ENCODE measurements at regions of chr17 and their contacts with region 1.

Region 1: GRCh38 chr17:5055543-5055942 is 20.3 kb upstream of the SLC52A1 start:
- DNase-seq: no peak
- H3K4me3 ChIP-seq: no peak overlapping the region
- H3K4me3 Mint-ChIP-seq: no peak overlapping the region
- H3K27ac ChIP-seq: no peak overlapping the region
- H3K27ac Mint-ChIP-seq: peak overlapping the region in 2 of 7 donors; percentile 22 to 35
- H3K4me1 ChIP-seq: peaks cover 2% of the 10 kb centered on the region
- H3K4me1 Mint-ChIP-seq: peaks cover under 1 to 3% (median 1%) of the 10 kb centered on the region in 4 donors
- H3K27me3 ChIP-seq: no peaks in the 10 kb centered on the region
- H3K27me3 Mint-ChIP-seq: peaks cover 0 to 1% of the 10 kb centered on the region in 2 donors

Region 2: DNA sequence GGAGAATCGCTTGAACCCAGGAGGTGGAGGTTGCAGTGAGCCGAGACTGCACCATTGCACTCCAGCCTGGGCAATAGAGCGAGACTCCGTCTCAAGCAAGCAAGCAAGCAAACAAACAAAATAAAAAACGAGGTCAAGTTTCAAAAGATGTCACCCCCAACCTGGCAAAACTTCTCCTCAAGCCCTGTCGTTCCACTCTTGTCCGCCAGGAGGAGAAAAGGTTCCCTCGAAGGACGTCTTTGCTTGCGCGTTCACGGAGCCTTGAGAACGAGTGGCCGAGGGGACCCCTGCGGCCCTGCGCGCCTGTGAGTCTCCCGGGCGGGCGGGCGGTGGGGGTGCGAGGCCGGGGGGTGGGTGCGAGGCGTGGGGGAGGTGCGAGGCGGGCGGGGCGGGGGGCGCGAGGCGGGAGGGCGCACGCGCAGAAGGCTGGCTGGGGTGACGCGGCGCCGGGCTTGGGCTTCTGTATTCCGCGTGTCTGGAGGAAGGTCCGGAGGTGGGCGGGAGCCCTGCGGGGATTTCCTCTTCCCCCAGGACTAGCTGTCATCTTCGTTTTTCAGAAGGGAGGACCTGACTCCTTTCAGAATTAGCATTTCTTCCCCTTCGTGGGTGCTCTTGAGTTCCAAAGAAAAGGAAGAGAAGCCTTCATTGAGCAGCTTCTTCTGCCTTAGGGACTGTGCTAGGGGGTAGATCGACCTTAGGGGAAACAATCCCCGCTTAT is 24.0 kb before region 1 on chr17:
- CTCF ChIA-PET with region 1: interaction called, 271 read pairs
- POLR2A ChIA-PET with region 1: interaction called, 146 read pairs
- intact Hi-C with region 1: no loop called
- DNase-seq: peak; percentile 77 to 83 (median 81)
- H3K4me3 ChIP-seq: peak overlapping the region in 1 of 2 donors; percentile 23
- H3K4me3 Mint-ChIP-seq: peak overlapping the region; percentile 79 to 89 (median 87)
- H3K27ac ChIP-seq: peak overlapping the region; percentile 67
- H3K27ac Mint-ChIP-seq: peak overlapping the region; percentile 90 to 94 (median 93)
- H3K4me1 ChIP-seq: peaks cover 25% of the 10 kb centered on the region
- H3K4me1 Mint-ChIP-seq: peaks cover 11 to 38% (median 17%) of the 10 kb centered on the region in 4 donors
- H3K27me3 ChIP-seq: no peaks in the 10 kb centered on the region
- H3K27me3 Mint-ChIP-seq: no peaks in the 10 kb centered on the region

Measured in CD4-positive, alpha-beta memory T cell (primary cell).